Heart right ventricle (tissue), 16 donors: ENCODE measurements at regions of chr5 and their contacts with region 1.

Region 1: DNA sequence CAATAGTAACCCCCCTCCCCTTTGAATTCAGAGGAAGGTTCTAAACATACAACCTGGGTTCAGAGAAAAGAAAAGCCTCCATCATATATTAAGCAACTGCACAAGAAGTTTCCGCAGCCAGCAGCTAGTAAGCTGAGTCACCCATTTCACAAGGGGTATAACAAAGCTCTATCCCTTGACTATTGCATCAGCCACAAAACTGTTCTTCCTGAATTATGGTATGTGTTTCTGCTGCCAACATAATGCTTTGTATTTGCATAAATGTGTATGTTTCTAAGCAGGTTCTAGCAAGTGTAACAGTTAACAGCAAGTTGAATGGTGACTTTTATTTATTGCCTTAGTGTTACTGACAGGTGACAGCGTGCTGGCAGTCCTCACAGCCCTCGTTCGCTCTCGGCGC is 6.8 kb upstream of the CEP120 start:
- DNase-seq: no peak
- ATAC-seq: peak in 2 of 8 donors; percentile 35 to 84
- H3K4me3 ChIP-seq: no peak overlapping the region
- H3K27ac ChIP-seq: peak overlapping the region in 1 of 10 donors; percentile 80
- H3K4me1 ChIP-seq: peaks cover 0 to 14% (median 0%) of the 10 kb centered on the region in 9 donors
- H3K27me3 ChIP-seq: peaks cover 0 to 5% (median 0%) of the 10 kb centered on the region in 7 donors
- CTCF ChIP-seq: no peak

Region 2: GRCh38 chr5:123500471-123500870 is 70.5 kb after region 1 on chr5:
- intact Hi-C with region 1: loop called in 3 of 10 experiments (anchors 5 to 10 kb)
- DNase-seq: no peak
- ATAC-seq: no peak
- H3K4me3 ChIP-seq: no peak overlapping the region
- H3K27ac ChIP-seq: no peak overlapping the region
- H3K4me1 ChIP-seq: peaks cover 0 to under 1% (median 0%) of the 10 kb centered on the region in 9 donors
- H3K27me3 ChIP-seq: no peaks in the 10 kb centered on the region
- CTCF ChIP-seq: no peak

Region 3: GRCh38 chr5:123505633-123506032 is 75.6 kb after region 1 on chr5:
- intact Hi-C with region 1: loop called in 3 of 10 experiments (anchors 5 to 10 kb)
- DNase-seq: no peak
- ATAC-seq: peak in 1 of 8 donors; percentile 53
- H3K4me3 ChIP-seq: no peak overlapping the region
- H3K27ac ChIP-seq: no peak overlapping the region
- H3K4me1 ChIP-seq: peaks cover 0 to 3% (median 0%) of the 10 kb centered on the region in 9 donors
- H3K27me3 ChIP-seq: no peaks in the 10 kb centered on the region
- CTCF ChIP-seq: no peak

Region 4: DNA sequence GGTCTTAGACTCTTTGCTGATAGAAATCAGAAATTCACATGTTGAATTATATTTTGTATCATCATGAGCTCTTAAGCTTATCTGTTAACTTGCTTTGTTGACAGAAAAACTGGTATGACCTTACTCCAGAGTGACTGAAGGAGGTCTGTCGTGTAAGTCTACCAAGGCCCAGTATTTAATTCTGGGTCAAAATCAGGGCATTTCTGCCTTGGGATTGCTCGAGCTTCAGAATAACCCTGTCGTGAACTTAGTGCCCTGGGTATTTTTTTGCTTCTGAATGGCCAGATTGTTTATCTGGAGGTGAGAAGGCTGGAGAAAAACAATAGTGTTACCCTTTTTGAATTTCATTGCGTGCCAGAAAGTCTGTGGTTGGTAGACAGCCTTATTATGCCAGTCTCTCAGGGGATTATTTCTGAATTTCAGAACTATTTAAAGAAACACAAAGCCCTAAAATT is 405.3 kb after region 1 on chr5:
- intact Hi-C with region 1: no loop called
- DNase-seq: no peak
- ATAC-seq: no peak
- H3K4me3 ChIP-seq: no peak overlapping the region
- H3K27ac ChIP-seq: no peak overlapping the region
- H3K4me1 ChIP-seq: peaks cover 0 to 6% (median 0%) of the 10 kb centered on the region in 9 donors
- H3K27me3 ChIP-seq: no peaks in the 10 kb centered on the region
- CTCF ChIP-seq: no peak